Heart left ventricle (tissue), 16 donors: ENCODE measurements at regions of chr3 and their contacts with region 1.

Region 1: GRCh38 chr3:183613366-183614285 is 21.8 kb upstream of the KLHL24 start:
- DNase-seq: no peak
- ATAC-seq: peak in 1 of 4 donors; percentile 65
- H3K4me3 ChIP-seq: no peak overlapping the region
- H3K27ac ChIP-seq: peak overlapping the region in 4 of 12 donors; percentile 6 to 34 (median 25)
- H3K4me1 ChIP-seq: peaks cover 0 to 9% (median 0%) of the 10 kb centered on the region in 12 donors
- H3K27me3 ChIP-seq: no peaks in the 10 kb centered on the region
- CTCF ChIP-seq: no peak
- POLR2A ChIP-seq: no peak

Region 2: GRCh38 chr3:183502237-183503181 is 111.1 kb before region 1 on chr3:
- intact Hi-C with region 1: loop called in 2 of 10 experiments (anchors 10 kb)
- DNase-seq: peak in 1 of 5 donors; percentile 47
- ATAC-seq: peak; percentile 73 to 89 (median 81)
- H3K4me3 ChIP-seq: no peak overlapping the region
- H3K27ac ChIP-seq: no peak overlapping the region
- H3K4me1 ChIP-seq: peaks cover 0 to 4% (median 0%) of the 10 kb centered on the region in 12 donors
- H3K27me3 ChIP-seq: no peaks in the 10 kb centered on the region
- CTCF ChIP-seq: peak in 11 of 12 donors; percentile 12 to 63 (median 45)
- POLR2A ChIP-seq: no peak